Gastrocnemius medialis (tissue), 4 donors: ENCODE measurements at regions of chr17 and their contacts with region 1.

Region 1: DNA sequence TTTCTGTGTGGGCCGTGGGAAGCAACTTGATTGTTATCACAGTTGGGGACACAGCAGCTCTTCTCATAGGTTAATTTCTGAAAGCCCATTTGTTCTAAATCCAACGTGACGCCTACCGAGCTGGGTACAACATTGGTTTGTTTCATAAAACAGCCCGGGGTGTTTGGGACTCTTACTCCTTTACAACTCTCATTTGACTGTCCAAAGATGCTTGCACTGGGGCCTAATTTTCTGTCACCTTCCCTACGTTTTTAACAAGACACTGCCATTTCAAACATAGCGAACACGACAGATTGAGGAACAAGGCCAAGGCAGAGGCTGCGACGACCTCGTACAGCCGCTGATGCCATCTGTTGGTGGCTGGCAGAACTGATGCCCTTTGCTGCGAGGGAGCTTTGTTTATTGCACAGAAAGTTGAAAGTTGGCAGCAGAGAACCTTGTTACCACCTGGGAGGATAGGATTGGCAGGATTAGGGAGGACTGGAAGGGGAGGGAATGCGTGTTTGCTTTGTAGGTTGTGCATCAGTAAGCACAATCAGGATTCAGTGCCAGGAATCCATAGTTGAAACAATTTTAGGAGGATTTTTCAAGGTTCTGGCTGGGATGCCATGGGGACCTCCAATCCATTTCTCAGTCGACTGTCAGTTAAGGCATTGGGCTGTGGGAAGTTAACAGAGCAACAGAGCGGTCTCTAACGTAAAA is 98.3 kb downstream of the PITPNC1 start:
- DNase-seq: peak; percentile 45 to 65
- ATAC-seq: peak; percentile 83 to 86
- H3K4me3 ChIP-seq: no peak overlapping the region
- H3K27ac ChIP-seq: peak overlapping the region; percentile 39 to 72 (median 62)
- H3K4me1 ChIP-seq: peaks cover 7 to 8% of the 10 kb centered on the region in 2 donors
- H3K27me3 ChIP-seq: no peaks in the 10 kb centered on the region
- CTCF ChIP-seq: peak; percentile 74 to 94 (median 88)
- POLR2A ChIP-seq: peak in 1 of 2 donors; percentile 10

Region 2: GRCh38 chr17:67689534-67690177 is 214.3 kb after region 1 on chr17:
- in situ Hi-C with region 1: loop called in 1 of 4 experiments (anchors 25 kb)
- intact Hi-C with region 1: loop called (anchors 10 kb)
- DNase-seq: peak in 1 of 2 donors; percentile 3
- ATAC-seq: peak; percentile 47 to 55
- H3K4me3 ChIP-seq: no peak overlapping the region
- H3K27ac ChIP-seq: no peak overlapping the region
- H3K4me1 ChIP-seq: no peaks in the 10 kb centered on the region
- H3K27me3 ChIP-seq: no peaks in the 10 kb centered on the region
- CTCF ChIP-seq: peak; percentile 65 to 80 (median 77)
- POLR2A ChIP-seq: no peak